ENCODE measurements at regions of chr2 and their contacts with region 1.

Region 1: DNA sequence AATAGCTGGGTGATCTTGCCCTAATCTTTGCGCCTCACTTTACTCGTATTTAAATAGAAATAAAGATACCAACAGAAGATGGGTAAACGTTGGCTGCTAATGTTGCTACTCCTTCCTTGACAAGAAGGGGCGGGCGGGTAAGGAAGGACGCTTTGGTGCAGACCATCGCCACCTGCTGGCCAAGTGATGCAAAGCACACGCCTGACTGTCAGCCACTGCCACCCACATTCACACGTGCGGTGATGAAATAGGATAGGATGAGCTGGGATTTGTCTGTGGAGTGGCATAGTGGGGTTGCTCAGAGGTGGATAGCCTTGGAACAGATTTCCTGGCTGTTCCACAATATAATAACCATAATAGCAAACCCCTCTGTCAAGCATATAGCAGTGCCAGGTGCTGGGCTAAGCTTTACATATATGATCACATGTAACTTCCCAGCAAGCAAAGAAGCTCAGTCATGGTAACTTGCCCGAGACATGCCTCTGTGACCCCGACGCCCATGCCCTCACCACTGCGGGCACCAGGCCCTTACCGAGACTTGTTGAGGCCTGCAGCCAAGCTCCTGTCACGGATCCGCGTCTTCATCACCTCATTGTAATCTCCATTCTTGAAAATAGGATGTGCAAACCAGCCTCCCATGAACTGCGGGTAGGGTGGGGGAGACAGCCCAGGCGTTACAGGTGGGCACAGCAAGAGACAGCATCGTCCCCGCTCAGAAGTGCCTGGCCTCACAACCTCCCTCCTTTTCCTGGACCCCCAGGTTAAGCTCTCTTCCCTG is 39.3 kb downstream of the LCT start:
- DNase-seq: peak; percentile 89
- H3K4me3 Mint-ChIP-seq: no peak overlapping the region
- H3K27ac Mint-ChIP-seq: no peak overlapping the region
- H3K4me1 Mint-ChIP-seq: peaks cover 12% of the 10 kb centered on the region
- H3K27me3 Mint-ChIP-seq: no peaks in the 10 kb centered on the region

Region 2: GRCh38 chr2:134988994-134989605 is 808.6 kb before region 1 on chr2:
- CTCF ChIA-PET with region 1: interaction called, 24 read pairs
- POLR2A ChIA-PET with region 1: no interaction called
- intact Hi-C with region 1: loop called (anchors 2 kb)
- DNase-seq: no peak
- H3K4me3 Mint-ChIP-seq: no peak overlapping the region
- H3K27ac Mint-ChIP-seq: no peak overlapping the region
- H3K4me1 Mint-ChIP-seq: no peaks in the 10 kb centered on the region
- H3K27me3 Mint-ChIP-seq: peaks cover 2% of the 10 kb centered on the region

Region 3: DNA sequence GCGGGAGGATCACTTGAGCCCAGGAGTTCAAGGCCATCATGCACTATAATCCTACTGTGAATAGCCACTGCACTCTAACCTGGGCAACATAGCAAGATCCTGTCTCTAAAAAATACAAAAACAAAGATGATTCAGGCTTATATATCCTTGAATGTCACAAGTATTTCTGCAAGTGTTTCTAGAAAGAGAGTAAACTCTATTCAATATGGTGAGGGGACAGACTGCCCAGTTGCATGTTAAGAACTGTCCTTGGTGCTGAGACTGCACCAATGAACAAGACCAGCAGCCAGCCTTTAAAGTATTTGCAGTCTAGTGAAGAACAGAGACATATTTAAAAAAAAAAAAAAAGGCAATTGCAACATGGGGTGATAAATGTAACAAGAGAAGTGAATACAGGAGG is 766.9 kb before region 1 on chr2:
- CTCF ChIA-PET with region 1: no interaction called
- POLR2A ChIA-PET with region 1: no interaction called
- intact Hi-C with region 1: no loop called
- DNase-seq: no peak
- H3K4me3 Mint-ChIP-seq: no peak overlapping the region
- H3K27ac Mint-ChIP-seq: no peak overlapping the region
- H3K4me1 Mint-ChIP-seq: no peaks in the 10 kb centered on the region
- H3K27me3 Mint-ChIP-seq: peaks cover 2% of the 10 kb centered on the region

Region 4: GRCh38 chr2:135473567-135473966 is 324.1 kb before region 1 on chr2:
- CTCF ChIA-PET with region 1: interaction called, 3 read pairs
- POLR2A ChIA-PET with region 1: no interaction called
- intact Hi-C with region 1: loop called (anchors 5 kb)
- DNase-seq: peak; percentile 42
- H3K4me3 Mint-ChIP-seq: no peak overlapping the region
- H3K27ac Mint-ChIP-seq: no peak overlapping the region
- H3K4me1 Mint-ChIP-seq: no peaks in the 10 kb centered on the region
- H3K27me3 Mint-ChIP-seq: no peaks in the 10 kb centered on the region

Region 5: DNA sequence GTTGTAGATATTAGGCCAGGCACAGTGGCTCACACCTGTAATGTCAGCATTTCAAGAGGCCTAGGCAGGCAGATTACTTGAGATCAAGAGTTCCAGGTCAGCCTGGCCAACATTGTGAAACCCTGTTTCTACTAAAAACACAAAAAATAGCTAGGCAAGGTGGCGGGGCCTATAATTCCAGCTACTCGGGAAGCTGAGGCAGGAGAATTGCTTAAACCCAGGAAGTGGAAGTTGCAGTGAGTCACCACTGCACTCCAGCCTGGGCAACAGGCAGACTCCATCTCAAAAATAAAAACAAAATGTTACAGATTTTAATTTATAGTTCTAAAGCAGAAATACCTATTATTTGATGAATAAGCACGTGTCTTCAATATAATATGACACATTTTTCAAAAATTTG is 121.7 kb before region 1 on chr2:
- CTCF ChIA-PET with region 1: no interaction called
- POLR2A ChIA-PET with region 1: no interaction called
- intact Hi-C with region 1: no loop called
- DNase-seq: no peak
- H3K4me3 Mint-ChIP-seq: no peak overlapping the region
- H3K27ac Mint-ChIP-seq: no peak overlapping the region
- H3K4me1 Mint-ChIP-seq: no peaks in the 10 kb centered on the region
- H3K27me3 Mint-ChIP-seq: no peaks in the 10 kb centered on the region

Region 6: DNA sequence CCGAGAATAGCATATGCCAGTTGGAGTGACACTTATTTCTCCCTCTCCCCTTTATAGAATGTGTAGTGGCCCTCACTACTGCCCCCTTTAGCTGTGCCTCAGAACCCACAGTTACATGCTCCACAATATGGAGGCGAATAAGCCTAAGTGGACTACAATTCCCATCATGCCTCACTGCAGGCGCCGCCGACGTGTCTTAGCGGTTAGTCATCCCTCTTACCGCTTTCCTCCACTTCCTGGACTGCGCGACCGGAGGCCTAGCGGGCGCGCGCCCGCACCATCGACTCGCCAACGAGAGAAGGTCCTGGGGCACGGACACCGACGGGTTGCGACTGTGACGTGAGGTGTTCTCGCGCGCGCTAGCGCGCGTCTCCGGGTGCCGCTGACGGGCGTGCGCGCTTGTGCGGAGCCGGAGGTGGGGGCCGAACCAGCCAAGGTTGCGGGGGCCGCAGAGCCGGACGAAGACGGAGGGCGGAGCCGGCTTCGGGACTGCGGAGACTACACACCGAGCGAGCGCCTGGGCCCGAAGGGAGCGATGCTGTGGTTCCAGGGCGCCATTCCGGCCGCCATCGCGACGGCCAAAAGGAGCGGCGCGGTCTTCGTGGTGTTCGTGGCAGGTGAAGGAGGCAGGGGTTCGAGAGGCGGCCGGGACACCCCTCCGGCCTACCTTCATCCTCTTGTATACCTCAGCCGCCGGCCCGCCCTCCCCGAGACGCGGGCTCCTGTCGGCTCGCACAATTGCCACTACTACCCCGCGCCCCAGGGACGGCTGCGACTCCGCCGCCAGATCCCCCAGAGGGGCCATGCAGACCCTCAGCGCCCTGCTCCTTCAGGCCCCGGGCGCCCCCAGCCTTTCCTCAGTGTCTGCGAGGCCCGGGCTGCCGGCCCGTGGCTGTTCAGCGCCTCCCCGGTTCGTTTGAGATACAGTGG is 56.0 kb before region 1 on chr2 and contains the start of gene UBXN4:
- CTCF ChIA-PET with region 1: interaction called, 30 read pairs
- POLR2A ChIA-PET with region 1: no interaction called
- intact Hi-C with region 1: loop called (anchors 2 kb)
- DNase-seq: peak; percentile 98
- H3K4me3 Mint-ChIP-seq: peak within 1 kb of the TSS; percentile 96
- H3K27ac Mint-ChIP-seq: peak within 1 kb of the TSS; percentile 99
- H3K4me1 Mint-ChIP-seq: peaks cover 24% of the 10 kb centered on the region
- H3K27me3 Mint-ChIP-seq: no peaks in the 10 kb centered on the region
- total RNA-seq, gene UBXN4: 107 TPM

Region 7: DNA sequence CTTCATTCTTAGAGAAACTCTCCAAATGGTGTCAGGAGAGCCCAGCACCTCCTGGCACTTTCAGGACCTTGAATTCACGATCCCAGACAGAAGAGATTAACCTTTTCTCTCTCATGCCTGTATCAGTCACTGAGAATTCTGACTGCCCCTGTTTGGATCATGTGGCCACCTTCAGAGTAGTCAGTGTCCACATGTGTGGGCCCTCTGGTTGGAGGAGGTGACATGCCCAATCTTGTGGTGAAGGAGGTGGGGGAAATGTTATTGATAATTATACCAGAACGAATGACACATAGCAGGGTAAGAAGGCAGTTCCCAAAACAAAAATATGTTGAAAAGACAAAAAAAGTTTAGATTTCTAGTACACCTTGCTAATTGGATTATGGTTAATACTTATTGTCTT is 24.4 kb before region 1 on chr2:
- CTCF ChIA-PET with region 1: interaction called, 13 read pairs
- POLR2A ChIA-PET with region 1: no interaction called
- intact Hi-C with region 1: no loop called
- DNase-seq: no peak
- H3K4me3 Mint-ChIP-seq: no peak overlapping the region
- H3K27ac Mint-ChIP-seq: peak overlapping the region; percentile 61
- H3K4me1 Mint-ChIP-seq: peaks cover 8% of the 10 kb centered on the region
- H3K27me3 Mint-ChIP-seq: no peaks in the 10 kb centered on the region

Region 8: DNA sequence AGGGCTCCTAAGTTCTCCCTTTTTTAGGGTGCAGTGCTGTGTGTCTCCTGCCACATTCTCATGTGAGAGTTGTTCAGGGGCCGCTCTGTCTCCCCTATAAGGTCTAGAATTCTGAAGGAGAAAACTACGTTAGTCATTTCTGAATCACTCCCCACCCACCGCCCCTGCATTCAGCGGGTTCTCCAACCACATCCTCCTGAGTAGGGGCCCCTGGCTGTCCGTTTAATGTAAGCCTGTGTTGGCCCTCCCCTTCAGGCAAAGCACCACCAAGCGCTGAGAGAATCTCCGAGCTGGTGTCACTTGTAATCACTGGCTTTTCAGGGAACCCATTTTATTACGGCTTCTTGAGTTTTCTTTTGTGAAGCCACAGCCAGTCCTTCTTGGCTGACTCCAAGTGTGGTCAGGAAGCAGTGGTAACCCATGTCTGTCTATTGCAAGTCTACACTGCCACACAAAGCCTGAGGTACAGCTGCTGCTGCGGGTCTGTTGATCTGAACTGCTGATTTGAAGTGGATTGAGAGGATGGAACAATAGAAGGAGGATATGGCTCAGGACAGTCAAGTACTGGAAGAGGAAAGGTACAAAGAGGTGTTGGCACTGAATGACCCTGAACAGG is 22.4 kb after region 1 on chr2:
- CTCF ChIA-PET with region 1: interaction called, 77 read pairs
- POLR2A ChIA-PET with region 1: no interaction called
- intact Hi-C with region 1: loop called (anchors 1 kb)
- DNase-seq: peak; percentile 94
- H3K4me3 Mint-ChIP-seq: peak overlapping the region; percentile 61
- H3K27ac Mint-ChIP-seq: peak overlapping the region; percentile 78
- H3K4me1 Mint-ChIP-seq: peaks cover 38% of the 10 kb centered on the region
- H3K27me3 Mint-ChIP-seq: no peaks in the 10 kb centered on the region

Region 9: GRCh38 chr2:135840601-135841000 is 42.9 kb after region 1 on chr2:
- CTCF ChIA-PET with region 1: interaction called, 10 read pairs
- POLR2A ChIA-PET with region 1: no interaction called
- intact Hi-C with region 1: no loop called
- DNase-seq: no peak
- H3K4me3 Mint-ChIP-seq: no peak overlapping the region
- H3K27ac Mint-ChIP-seq: peak overlapping the region; percentile 23
- H3K4me1 Mint-ChIP-seq: peaks cover 10% of the 10 kb centered on the region
- H3K27me3 Mint-ChIP-seq: no peaks in the 10 kb centered on the region